Natural killer cell (primary cell): ENCODE measurements at regions of chr7 and their contacts with region 1.

Region 1: GRCh38 chr7:158856883-158857668 is 718 bp downstream of the DYNC2I1 start:
- DNase-seq: no peak
- ATAC-seq: no peak
- H3K4me3 ChIP-seq: peak overlapping the region; percentile 56
- H3K4me3 Mint-ChIP-seq: peak overlapping the region; percentile 98
- H3K27ac ChIP-seq: no peak overlapping the region
- H3K27ac Mint-ChIP-seq: peak overlapping the region; percentile 89 to 91
- H3K4me1 ChIP-seq: peaks cover 5% of the 10 kb centered on the region
- H3K4me1 Mint-ChIP-seq: peaks cover 15 to 22% of the 10 kb centered on the region in 2 donors
- H3K27me3 ChIP-seq: no peaks in the 10 kb centered on the region
- H3K27me3 Mint-ChIP-seq: no peaks in the 10 kb centered on the region
- CTCF ChIP-seq: no peak

Region 2: DNA sequence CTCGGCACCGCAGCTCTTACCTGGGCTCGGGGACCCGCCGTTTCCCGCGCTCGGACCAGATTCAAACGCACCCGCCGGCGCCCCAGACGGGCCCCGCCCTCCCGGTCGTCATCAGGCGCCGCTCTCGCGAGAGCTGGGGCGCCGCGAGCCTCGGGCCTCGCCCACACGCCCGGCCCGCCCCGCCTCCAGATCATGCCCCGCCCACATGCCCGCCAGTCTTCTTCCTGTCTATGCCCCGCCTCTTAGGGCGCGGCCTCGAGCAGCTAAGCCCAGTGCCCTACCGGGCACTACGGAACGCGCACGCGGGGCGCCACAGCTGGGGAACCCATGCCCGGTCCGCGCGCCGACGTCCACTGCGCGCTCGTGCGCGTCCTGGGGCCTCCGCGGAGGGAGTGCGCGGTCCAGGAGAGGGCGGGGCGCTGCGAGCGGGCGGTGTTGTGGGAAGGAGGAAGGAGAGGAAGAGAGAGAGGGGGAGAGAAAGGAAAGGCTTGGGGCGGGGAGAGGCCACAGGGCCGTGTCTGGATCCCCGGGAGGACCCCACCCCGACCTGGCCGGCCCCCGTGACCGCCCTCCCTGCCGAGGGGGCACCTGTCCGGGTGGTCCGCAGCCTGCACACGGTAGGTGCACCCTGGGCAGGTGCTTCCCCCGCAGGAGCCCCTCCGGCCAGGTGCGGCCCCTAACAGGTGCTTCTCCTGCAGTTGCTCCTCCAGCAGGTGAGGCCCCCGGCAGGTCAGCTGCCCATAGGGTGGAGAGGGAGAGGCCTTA is 152.2 kb before region 1 on chr7 and contains the start of gene NCAPG2:
- intact Hi-C with region 1: loop called (anchors 1 kb)
- DNase-seq: peak; percentile 98
- ATAC-seq: peak; percentile 98 to 100 (median 99)
- H3K4me3 ChIP-seq: peak within 1 kb of the TSS; percentile 99
- H3K4me3 Mint-ChIP-seq: peak within 1 kb of the TSS; percentile 90
- H3K27ac ChIP-seq: peak within 1 kb of the TSS; percentile 76
- H3K27ac Mint-ChIP-seq: peak within 1 kb of the TSS; percentile 53 to 95
- H3K4me1 ChIP-seq: peaks cover 26% of the 10 kb centered on the region
- H3K4me1 Mint-ChIP-seq: peaks cover 17 to 38% of the 10 kb centered on the region in 2 donors
- H3K27me3 ChIP-seq: no peaks in the 10 kb centered on the region
- H3K27me3 Mint-ChIP-seq: no peaks in the 10 kb centered on the region
- CTCF ChIP-seq: no peak
- total RNA-seq, gene NCAPG2: 8.8 to 14.8 (median 14.1) TPM